Activated CD8-positive, alpha-beta T cell treated with anti-CD3 and anti-CD28 coated beads for 36 hours (primary cell): ENCODE measurements at regions of chr1 and their contacts with region 1.

Region 1: GRCh38 chr1:24930204-24931145 is at the start of gene RUNX3:
- DNase-seq: peak; percentile 92
- ATAC-seq: peak; percentile 81
- H3K4me3 Mint-ChIP-seq: peak within 1 kb of the TSS; percentile 96
- H3K27ac Mint-ChIP-seq: peak within 1 kb of the TSS; percentile 90
- H3K4me1 Mint-ChIP-seq: peaks cover 60% of the 10 kb centered on the region
- H3K27me3 Mint-ChIP-seq: no peaks in the 10 kb centered on the region
- CTCF ChIP-seq: no peak
- total RNA-seq, gene RUNX3: 180 to 183 TPM

Region 2: GRCh38 chr1:24909388-24909898 is 21.0 kb before region 1 on chr1:
- CTCF ChIA-PET with region 1: interaction called, 6 read pairs
- POLR2A ChIA-PET with region 1: interaction called, 122 read pairs
- intact Hi-C with region 1: loop called (anchors 1 kb)
- DNase-seq: no peak
- ATAC-seq: no peak
- H3K4me3 Mint-ChIP-seq: peak overlapping the region; percentile 26
- H3K27ac Mint-ChIP-seq: peak overlapping the region; percentile 91
- H3K4me1 Mint-ChIP-seq: peaks cover 62% of the 10 kb centered on the region
- H3K27me3 Mint-ChIP-seq: no peaks in the 10 kb centered on the region
- CTCF ChIP-seq: no peak

Region 3: DNA sequence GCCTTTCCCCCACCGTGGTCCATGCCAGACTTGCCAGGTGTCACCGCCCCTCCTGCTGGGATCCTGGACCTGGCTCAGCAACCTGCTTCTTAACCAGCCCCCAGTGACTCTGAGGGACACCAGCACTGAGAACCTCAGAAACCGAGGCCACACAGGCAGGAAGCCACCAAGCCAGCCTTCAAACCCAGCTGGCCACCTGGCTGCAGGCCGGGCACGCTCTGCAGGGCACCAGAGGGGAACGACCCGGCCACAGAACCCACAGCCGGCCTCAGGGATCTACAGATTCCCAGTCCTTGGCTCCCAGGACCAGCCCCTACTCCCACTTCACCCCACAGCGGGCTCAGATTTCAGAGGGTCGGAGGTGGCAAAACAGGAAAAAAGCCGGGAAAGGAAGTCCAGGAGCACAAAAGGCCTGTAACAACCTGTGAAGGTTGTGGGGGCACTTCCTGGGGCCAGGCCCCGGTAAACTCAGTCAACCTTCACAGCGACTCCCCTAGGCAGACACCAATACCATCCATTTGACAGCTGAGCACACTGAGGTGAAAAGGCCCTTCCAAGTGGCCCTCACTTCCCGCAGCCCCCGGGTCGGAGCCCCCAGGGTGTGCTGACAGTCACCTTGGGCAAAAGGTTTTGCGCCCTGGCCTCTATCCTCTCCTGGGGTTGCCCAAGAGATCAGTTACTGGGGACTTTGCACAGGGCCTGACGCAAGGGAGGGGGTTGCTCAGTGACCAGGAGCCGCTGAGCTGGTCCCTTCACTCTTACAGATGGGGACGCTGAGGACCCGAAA is 14.5 kb before region 1 on chr1:
- CTCF ChIA-PET with region 1: interaction called, 9 read pairs
- POLR2A ChIA-PET with region 1: interaction called, 122 read pairs
- intact Hi-C with region 1: loop called (anchors 1 kb)
- DNase-seq: no peak
- ATAC-seq: no peak
- H3K4me3 Mint-ChIP-seq: no peak overlapping the region
- H3K27ac Mint-ChIP-seq: peak overlapping the region; percentile 89
- H3K4me1 Mint-ChIP-seq: peaks cover 91% of the 10 kb centered on the region
- H3K27me3 Mint-ChIP-seq: no peaks in the 10 kb centered on the region
- CTCF ChIP-seq: no peak

Region 4: DNA sequence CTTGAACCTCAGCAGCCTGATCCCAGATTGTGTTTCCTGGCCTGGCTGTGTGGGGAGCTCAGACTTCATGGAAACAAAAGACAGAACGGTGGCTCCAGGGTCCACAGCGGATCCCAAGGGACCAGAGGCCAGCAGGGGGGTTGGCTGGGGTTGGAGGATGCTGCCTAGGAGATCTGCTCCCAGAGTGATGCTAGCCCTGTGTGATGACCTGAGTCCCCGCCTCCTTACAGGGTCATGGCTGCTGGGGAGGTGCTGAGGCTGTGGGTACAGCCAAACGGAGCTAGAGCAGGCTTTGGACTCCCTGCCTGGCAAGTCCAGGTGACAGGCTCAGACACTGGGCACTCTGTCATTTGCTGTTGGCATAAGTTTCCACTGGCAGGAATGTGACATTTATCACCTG is 11.1 kb after region 1 on chr1:
- CTCF ChIA-PET with region 1: interaction called, 12 read pairs
- POLR2A ChIA-PET with region 1: interaction called, 14 read pairs
- intact Hi-C with region 1: no loop called
- DNase-seq: no peak
- ATAC-seq: no peak
- H3K4me3 Mint-ChIP-seq: no peak overlapping the region
- H3K27ac Mint-ChIP-seq: peak overlapping the region; percentile 61
- H3K4me1 Mint-ChIP-seq: peaks cover 73% of the 10 kb centered on the region
- H3K27me3 Mint-ChIP-seq: no peaks in the 10 kb centered on the region
- CTCF ChIP-seq: no peak

Region 5: DNA sequence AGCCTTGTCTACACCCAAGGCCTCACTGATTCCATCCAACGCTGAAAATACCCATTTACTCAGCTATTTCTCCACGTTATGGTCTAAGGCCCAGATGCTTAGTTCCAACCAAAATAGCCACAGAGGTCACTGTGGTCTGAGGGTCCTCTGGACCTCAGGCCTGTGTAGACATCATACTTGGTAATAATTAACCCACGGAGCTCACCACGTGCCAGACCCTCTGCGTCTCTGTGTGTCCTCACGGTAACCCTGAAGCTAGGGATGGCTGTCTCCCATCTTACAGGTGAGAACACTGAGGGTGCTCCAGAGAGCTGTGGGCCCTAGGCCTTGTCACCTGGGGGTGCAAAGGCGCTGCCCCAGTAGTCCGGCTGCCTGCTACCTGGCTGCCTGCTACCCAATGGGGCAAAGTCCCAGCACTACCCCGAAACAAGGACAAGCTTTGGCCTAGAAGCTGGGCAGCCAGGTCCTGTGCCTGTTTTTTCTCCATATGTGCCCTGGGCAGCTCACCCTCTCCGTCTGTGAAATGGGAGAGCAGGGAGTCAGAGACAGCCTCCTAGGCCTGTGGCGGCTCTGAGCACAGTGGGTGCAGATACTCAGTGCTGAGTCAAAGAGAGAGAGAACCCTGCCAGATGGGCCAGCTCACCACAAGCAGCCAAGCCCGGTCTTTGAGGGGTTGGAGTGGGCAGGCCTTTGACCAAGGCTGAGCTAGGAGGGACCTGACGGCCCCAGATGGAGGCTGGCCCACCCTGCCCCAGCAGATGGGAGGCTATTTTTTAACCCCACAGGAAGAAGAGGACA is 16.6 kb after region 1 on chr1:
- CTCF ChIA-PET with region 1: interaction called, 53 read pairs
- POLR2A ChIA-PET with region 1: interaction called, 21 read pairs
- intact Hi-C with region 1: no loop called
- DNase-seq: no peak
- ATAC-seq: peak; percentile 28
- H3K4me3 Mint-ChIP-seq: no peak overlapping the region
- H3K27ac Mint-ChIP-seq: peak overlapping the region; percentile 71
- H3K4me1 Mint-ChIP-seq: peaks cover 73% of the 10 kb centered on the region
- H3K27me3 Mint-ChIP-seq: no peaks in the 10 kb centered on the region
- CTCF ChIP-seq: no peak

Region 6: GRCh38 chr1:25099343-25099951 is 169.0 kb after region 1 on chr1:
- CTCF ChIA-PET with region 1: interaction called, 46 read pairs
- POLR2A ChIA-PET with region 1: interaction called, 5 read pairs
- intact Hi-C with region 1: no loop called
- DNase-seq: peak; percentile 87
- ATAC-seq: peak; percentile 74
- H3K4me3 Mint-ChIP-seq: peak overlapping the region; percentile 42
- H3K27ac Mint-ChIP-seq: peak overlapping the region; percentile 76
- H3K4me1 Mint-ChIP-seq: peaks cover 73% of the 10 kb centered on the region
- H3K27me3 Mint-ChIP-seq: no peaks in the 10 kb centered on the region
- CTCF ChIP-seq: no peak